MCF 10A (cell line): ENCODE measurements at regions of chr10 and their contacts with region 1.

Region 1: GRCh38 chr10:102713814-102714620 is at the start of gene ARL3:
- DNase-seq: peak; percentile 98
- H3K4me3 Mint-ChIP-seq: peak within 1 kb of the TSS; percentile 97
- H3K27ac Mint-ChIP-seq: peak within 1 kb of the TSS; percentile 92
- H3K4me1 Mint-ChIP-seq: peaks cover 30% of the 10 kb centered on the region
- H3K27me3 Mint-ChIP-seq: no peaks in the 10 kb centered on the region
- CTCF ChIP-seq: peak; percentile 40
- total RNA-seq, gene ARL3: 6.8 and 7.0 TPM in 2 replicates

Region 2: DNA sequence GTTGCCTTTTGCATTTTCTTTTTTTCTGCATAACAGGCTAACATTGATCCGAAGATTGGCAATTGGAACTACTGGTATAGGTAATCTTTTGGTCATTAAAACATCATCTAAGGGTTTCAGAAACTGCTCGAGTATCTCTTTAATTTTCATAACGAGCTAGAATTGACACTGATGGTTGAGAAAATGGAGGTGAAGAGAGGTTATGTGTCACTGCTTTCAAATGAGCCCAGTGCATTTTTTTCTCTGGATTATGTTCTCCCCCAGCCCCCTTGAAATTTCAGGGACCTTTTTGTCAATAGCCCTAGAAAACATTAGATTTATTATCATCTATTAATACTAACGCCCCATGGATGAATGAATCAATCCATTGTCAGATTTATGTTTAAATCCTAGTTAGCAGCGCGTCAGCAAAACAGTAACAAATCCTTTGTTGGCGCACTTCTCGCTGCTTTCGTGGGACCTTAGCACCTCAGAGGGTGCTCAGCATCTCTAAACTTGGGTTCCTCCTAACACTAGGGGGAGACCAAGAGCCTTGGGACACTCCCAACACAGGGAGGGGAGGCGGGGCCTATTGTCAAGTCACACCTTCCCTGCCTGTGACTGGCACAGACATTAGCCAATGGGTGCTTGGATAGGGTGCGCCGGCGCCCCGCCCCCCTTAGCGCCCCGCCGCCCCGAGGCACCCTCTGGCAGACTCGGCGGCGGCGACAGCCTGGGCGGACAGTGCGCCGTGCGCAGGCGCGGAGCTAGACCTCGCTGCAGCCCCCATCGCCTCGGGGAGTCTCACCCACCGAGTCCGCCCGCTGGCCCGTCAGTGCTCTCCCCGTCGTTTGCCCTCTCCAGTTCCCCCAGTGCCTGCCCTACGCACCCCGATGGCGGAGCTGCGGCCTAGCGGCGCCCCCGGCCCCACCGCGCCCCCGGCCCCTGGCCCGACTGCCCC is 210.5 kb before region 1 on chr10 and contains the start of gene SUFU:
- CTCF ChIA-PET with region 1: no interaction called
- POLR2A ChIA-PET with region 1: interaction called, 27 read pairs
- intact Hi-C with region 1: no loop called
- DNase-seq: peak; percentile 100
- H3K4me3 Mint-ChIP-seq: no peak within 1 kb of the TSS
- H3K27ac Mint-ChIP-seq: peak within 1 kb of the TSS; percentile 65
- H3K4me1 Mint-ChIP-seq: peaks cover 16% of the 10 kb centered on the region
- H3K27me3 Mint-ChIP-seq: no peaks in the 10 kb centered on the region
- CTCF ChIP-seq: peak; percentile 75
- total RNA-seq, gene SUFU: 6.3 TPM in 2 replicates

Region 3: DNA sequence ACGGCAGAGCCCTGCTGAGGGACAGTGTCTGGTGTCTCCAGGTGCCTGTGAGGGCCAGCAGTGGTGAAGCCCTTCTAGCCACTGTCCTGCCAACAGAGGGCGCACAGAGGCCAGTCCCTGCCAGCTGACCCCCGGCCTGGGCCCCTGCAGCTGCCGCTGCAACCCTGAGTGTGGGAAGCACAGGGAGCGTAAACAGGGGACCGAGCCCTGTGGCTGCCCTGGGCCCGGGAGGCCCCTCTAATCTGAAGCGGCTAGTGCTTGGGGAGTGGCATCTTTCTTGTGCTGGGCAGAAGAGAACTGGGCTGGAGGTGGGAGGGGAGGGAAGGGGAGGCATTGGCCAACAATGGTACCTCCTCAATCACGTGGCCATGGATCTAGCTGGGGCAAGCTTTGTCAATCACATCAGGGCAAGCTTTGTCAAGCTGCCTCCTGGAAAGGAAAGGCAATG is 35.2 kb before region 1 on chr10:
- CTCF ChIA-PET with region 1: interaction called, 12 read pairs
- POLR2A ChIA-PET with region 1: interaction called, 18 read pairs
- intact Hi-C with region 1: loop called (anchors 5 kb)
- DNase-seq: peak; percentile 63
- H3K4me3 Mint-ChIP-seq: no peak overlapping the region
- H3K27ac Mint-ChIP-seq: no peak overlapping the region
- H3K4me1 Mint-ChIP-seq: peaks cover 4% of the 10 kb centered on the region
- H3K27me3 Mint-ChIP-seq: no peaks in the 10 kb centered on the region
- CTCF ChIP-seq: peak; percentile 66

Region 4: DNA sequence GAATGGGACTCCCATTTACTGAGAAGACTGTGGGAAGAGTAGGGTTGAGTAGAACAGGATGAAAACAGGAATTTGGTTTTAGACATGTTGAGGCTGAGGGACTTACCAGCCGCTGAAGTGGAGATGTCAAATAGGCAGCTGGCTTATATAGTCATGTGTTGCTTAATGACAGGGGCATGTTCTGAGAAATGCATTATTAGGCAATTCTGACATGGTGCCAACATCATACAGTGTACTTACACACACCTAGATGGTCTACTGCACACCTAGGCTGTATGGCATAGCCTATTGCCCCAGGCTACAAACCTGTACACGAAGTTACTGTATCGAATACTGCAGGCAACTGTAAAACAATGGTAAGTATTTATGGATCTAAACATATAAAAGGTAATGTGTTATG is 17.3 kb before region 1 on chr10:
- CTCF ChIA-PET with region 1: interaction called, 11 read pairs
- POLR2A ChIA-PET with region 1: interaction called, 14 read pairs
- intact Hi-C with region 1: no loop called
- DNase-seq: peak; percentile 86
- H3K4me3 Mint-ChIP-seq: no peak overlapping the region
- H3K27ac Mint-ChIP-seq: peak overlapping the region; percentile 82
- H3K4me1 Mint-ChIP-seq: peaks cover 6% of the 10 kb centered on the region
- H3K27me3 Mint-ChIP-seq: no peaks in the 10 kb centered on the region
- CTCF ChIP-seq: no peak

Region 5: DNA sequence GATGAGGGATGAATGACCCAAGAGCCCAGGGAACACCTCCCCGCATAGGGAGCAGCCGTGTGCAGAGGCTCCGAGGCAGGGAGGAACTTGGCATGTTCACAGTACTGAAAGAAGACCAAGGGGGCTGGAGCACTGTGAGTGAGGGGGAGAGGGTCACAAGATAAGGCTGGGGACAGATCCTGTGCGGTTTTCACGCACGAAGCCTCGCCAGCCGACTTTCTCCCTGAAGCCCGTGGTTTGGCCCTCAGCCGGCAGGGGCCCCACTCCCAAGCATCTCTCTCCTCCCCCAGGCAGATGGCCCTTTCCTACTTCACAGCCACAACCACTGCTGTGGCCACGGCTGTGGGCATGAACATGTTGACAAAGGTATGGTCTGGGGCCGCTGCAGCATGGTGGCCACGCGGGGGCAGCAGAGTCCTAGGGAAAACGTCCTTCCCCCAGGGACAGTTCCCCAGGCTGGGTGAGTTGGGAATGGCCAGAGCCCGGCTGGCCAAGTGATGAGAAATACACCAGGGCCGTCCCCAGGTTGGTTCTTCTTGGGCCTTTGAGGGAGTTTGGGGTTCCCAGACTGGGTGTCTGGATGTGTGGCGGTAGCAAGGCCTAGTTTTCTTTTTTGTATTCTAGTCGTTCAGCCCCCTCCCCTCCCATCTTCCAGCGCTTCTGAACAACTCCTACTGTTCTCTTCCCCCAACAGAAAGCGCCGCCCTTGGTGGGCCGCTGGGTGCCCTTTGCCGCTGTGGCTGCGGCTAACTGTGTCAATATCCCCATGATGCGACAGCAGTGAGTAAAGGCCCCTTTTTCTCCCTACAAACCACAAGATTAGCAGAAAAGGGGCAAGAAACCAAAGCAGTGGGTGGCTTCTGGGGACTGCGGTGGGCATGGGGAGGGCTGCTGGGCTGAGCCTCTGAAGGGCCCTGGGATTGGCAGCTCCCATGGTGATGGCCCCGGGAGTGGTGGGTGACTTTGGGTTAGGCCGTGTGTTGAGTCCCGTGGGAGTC is 15.3 kb after region 1 on chr10:
- CTCF ChIA-PET with region 1: interaction called, 5 read pairs
- POLR2A ChIA-PET with region 1: interaction called, 13 read pairs
- intact Hi-C with region 1: no loop called
- DNase-seq: peak; percentile 75
- H3K4me3 Mint-ChIP-seq: no peak overlapping the region
- H3K27ac Mint-ChIP-seq: no peak overlapping the region
- H3K4me1 Mint-ChIP-seq: peaks cover 6% of the 10 kb centered on the region
- H3K27me3 Mint-ChIP-seq: no peaks in the 10 kb centered on the region
- CTCF ChIP-seq: peak; percentile 81

Region 6: GRCh38 chr10:102743588-102744373 is 29.8 kb after region 1 on chr10 and contains the start of gene WBP1L:
- CTCF ChIA-PET with region 1: interaction called, 8 read pairs
- POLR2A ChIA-PET with region 1: interaction called, 41 read pairs
- intact Hi-C with region 1: loop called (anchors 1 kb)
- DNase-seq: peak; percentile 99
- H3K4me3 Mint-ChIP-seq: peak within 1 kb of the TSS; percentile 91
- H3K27ac Mint-ChIP-seq: peak within 1 kb of the TSS; percentile 97
- H3K4me1 Mint-ChIP-seq: peaks cover 24% of the 10 kb centered on the region
- H3K27me3 Mint-ChIP-seq: no peaks in the 10 kb centered on the region
- CTCF ChIP-seq: no peak
- total RNA-seq, gene WBP1L: 19.8 and 24.8 TPM in 2 replicates

Region 7: DNA sequence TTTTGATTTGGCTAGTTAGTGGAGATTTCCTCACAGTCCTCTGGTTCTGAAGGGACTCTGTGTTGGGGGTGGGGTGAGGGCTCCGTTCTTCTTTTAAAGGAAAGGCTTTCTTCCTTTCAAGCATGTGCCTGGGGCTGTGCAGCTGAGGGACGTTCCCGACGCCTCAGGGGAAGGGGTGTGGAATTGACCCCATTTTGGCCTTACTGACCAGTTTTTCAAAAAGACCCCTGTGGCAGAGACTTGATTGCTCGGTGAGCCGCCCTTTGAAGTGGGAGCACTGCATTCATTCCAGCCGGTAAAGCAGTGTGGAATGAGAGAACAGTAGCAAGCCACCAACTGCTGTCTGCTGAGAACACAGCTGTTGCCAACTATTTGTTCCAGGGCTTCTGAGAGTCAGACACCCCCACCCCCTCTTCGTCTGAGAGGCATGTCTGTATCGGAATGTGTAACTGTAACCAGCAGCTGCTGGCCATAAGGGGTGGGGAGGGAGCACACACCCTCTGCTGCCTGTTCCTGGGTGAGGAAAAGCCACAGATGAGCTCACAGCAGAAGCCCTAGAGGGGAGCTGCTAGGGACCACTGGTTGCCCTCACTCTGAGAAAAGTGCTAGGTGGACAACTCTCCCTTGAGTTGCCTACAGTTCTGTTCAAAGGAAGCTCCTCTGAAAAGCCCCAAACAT is 62.9 kb after region 1 on chr10:
- CTCF ChIA-PET with region 1: interaction called, 3 read pairs
- POLR2A ChIA-PET with region 1: interaction called, 22 read pairs
- intact Hi-C with region 1: no loop called
- DNase-seq: peak; percentile 94
- H3K4me3 Mint-ChIP-seq: peak overlapping the region; percentile 64
- H3K27ac Mint-ChIP-seq: peak overlapping the region; percentile 64
- H3K4me1 Mint-ChIP-seq: peaks cover 41% of the 10 kb centered on the region
- H3K27me3 Mint-ChIP-seq: no peaks in the 10 kb centered on the region
- CTCF ChIP-seq: no peak